Transverse colon (tissue), 4 donors: ENCODE measurements at regions of chr18 and their contacts with region 1.

Region 1: DNA sequence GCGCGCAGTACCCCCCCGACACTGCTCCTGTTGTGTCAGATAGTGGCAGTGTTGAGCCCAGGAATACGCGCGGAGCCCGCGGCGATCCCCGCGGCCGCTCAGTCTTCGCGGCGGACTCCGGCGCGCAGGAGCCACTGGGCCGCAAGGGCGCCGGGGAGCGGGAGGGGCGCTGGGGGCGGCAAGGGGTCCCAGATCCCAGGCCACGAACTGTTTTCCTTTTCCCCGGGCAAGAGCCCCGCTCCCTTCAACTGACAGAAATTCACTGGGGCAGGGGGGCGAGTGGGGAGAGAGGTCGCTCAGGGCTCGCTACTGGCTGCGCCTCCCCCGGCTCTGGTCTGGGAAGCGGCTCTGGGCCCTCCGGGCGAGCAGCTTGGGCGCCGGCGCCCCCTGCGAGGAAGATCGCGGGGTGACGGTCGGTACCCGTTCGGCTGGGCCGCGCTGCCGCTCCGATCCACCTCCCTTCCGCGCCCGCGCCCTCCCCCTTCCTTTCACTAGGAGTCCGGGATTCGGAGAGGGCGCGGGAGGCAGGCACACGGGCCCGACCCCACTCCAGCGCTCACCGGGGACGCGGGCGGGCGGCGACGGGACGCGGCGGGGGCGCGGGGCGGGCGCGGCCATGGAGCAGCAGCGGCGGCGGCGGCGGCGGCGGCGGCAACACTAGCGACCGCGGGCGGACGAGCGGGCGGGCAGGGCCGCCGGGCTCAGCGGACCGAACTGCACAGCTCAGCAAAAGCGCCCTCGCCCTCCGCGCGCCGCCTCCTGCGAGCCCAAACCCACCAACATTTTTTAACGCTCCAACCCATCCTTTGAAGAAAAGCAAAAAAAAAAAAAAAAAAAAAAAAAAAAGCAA is 1.4 kb upstream of the SETBP1 start:
- DNase-seq: peak; percentile 90
- H3K4me3 ChIP-seq: peak overlapping the region; percentile 39 to 87 (median 80)
- H3K27ac ChIP-seq: peak overlapping the region; percentile 95 to 99 (median 98)
- H3K4me1 ChIP-seq: peaks cover 0 to 9% (median 7%) of the 10 kb centered on the region in 4 donors
- H3K27me3 ChIP-seq: no peaks in the 10 kb centered on the region
- CTCF ChIP-seq: peak; percentile 61 to 83 (median 69)
- EP300 ChIP-seq: no peak
- POLR2A ChIP-seq: peak; percentile 89

Region 2: GRCh38 chr18:44733069-44733753 is 53.9 kb after region 1 on chr18:
- in situ Hi-C with region 1: no loop called
- intact Hi-C with region 1: no loop called
- DNase-seq: no peak
- H3K4me3 ChIP-seq: no peak overlapping the region
- H3K27ac ChIP-seq: peak overlapping the region; percentile 9 to 68 (median 30)
- H3K4me1 ChIP-seq: peaks cover 34 to 63% (median 37%) of the 10 kb centered on the region in 4 donors
- H3K27me3 ChIP-seq: no peaks in the 10 kb centered on the region
- CTCF ChIP-seq: no peak
- EP300 ChIP-seq: no peak
- POLR2A ChIP-seq: no peak

Region 3: DNA sequence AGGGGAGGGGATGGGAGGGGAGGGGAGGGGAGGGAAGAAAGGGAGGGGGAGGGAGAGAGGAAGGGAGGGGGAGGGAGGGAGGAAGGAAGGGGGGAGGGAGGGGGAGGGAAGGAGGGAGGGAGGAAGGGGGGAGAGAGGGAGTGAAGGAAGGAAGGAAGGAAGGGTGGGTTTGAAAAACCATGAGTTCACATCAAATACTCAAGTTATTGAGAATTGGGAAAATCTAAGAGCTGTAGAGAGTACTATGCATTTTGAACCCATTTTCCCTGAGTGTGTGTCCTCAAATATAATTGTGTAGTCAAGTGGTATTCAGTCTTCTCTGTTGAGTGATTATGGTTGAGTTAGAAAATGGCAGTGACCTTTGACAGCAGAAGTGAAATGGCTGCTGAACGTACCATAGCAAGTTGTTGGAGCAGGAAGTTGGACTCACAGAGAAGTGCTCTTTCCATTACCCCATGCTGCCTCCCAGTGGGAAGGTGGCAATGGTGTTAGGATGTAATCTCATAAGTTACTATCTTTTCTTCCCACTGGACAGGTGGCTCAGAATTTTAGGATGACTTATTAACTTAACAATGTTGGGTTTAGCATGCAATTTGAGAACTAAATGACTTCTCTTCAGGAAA is 216.0 kb after region 1 on chr18:
- in situ Hi-C with region 1: loop called in 2 of 4 experiments (anchors 10 to 25 kb)
- intact Hi-C with region 1: no loop called
- DNase-seq: peak; percentile 76
- H3K4me3 ChIP-seq: no peak overlapping the region
- H3K27ac ChIP-seq: no peak overlapping the region
- H3K4me1 ChIP-seq: peaks cover 0 to 9% (median 2%) of the 10 kb centered on the region in 4 donors
- H3K27me3 ChIP-seq: no peaks in the 10 kb centered on the region
- CTCF ChIP-seq: peak; percentile 31 to 78 (median 49)
- EP300 ChIP-seq: no peak
- POLR2A ChIP-seq: no peak